ENCODE measurements at regions of chr19 and their contacts with region 1.

Region 1: DNA sequence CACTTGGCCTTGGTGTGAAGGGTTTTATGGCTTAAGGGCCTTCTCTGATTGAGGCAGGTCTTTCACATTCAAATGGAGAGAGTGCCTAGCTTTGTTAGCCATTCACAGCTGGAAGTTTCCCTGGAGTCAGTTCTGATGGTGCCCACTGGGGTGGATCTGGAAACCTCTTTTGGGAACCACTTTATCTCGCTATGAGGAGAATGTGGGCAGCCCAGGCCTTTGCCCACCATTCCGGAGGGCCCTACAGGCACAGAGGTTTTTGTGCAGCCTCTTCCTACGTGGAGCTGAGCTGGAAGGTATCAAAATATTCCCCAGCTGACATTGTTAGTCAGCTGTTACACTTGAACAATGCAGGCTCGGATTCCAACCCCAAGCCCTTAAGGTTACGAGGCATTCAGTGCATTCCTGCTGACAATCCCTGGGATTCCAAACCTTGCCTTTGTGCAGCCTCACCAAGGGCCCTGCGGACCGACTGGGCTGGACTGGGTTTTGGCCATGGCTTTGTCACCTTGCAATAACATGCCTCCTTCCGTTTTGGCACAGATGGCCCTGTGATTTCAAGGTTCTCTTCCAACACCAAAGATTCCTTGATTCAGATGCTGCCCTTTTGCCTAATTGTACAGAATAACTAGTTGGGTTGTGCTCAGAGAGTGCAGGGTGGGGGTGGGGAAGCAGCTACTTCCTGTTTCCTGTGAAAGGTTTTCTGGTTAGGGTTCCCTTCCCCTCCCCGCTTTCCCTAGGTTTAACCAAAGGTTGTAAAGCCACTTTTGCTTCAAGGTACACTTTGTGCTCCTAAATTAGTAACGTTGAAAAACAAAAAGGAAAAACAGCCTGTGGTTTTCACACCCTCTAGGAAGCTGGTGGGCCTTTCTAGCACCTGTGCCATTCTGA is 27.0 kb downstream of the SAE1 start:
- DNase-seq: peak in 1 of 4 experiments; percentile 15
- ATAC-seq: no peak; the same call in 1 of the 3 replicates
- H3K4me3 ChIP-seq: no peak overlapping the region
- H3K27ac ChIP-seq: peak overlapping the region; percentile 67; the same call in 2 of the 3 replicates
- H3K4me1 ChIP-seq: peaks cover 0 to 10% of the 10 kb centered on the region in 2 experiments; a peak in 3 of 5 replicates
- H3K27me3 ChIP-seq: no peaks in the 10 kb centered on the region
- CTCF ChIP-seq: no peak
- EP300 ChIP-seq: no peak
- POLR2A ChIP-seq: no peak
- RAD21 ChIP-seq: no peak

Region 2: DNA sequence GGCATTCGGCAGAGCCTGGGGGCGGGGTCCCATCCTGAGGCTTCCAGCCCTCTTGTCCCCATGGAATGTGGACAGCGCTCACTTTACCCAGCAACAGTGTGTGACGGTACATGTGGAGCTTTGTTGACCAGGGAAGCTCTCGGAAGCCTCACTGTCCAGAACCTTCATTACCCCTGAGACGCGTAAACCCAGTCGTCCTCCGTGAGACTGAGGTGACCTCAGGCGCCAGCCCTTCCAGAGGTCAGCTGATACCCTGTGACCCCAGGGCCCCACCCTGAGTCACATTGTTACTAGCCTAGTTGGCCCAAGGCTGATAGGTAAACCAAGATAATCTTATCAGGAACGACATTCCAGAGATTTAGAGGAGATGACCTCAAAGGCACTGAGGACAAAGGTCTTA is 99.1 kb before region 1 on chr19:
- CTCF ChIA-PET with region 1: no interaction called
- POLR2A ChIA-PET with region 1: no interaction called
- in situ Hi-C with region 1: no loop called
- intact Hi-C with region 1: no loop called
- DNase-seq: peak in 2 of 4 experiments; percentile 38 to 48
- ATAC-seq: peak; percentile 35; the same call in 2 of the 3 replicates
- H3K4me3 ChIP-seq: no peak overlapping the region
- H3K27ac ChIP-seq: no peak overlapping the region
- H3K4me1 ChIP-seq: peaks cover 3 to 17% of the 10 kb centered on the region in 2 experiments; a peak in 4 of 5 replicates
- H3K27me3 ChIP-seq: no peaks in the 10 kb centered on the region
- CTCF ChIP-seq: no peak
- EP300 ChIP-seq: no peak
- POLR2A ChIP-seq: no peak
- RAD21 ChIP-seq: no peak

Region 3: DNA sequence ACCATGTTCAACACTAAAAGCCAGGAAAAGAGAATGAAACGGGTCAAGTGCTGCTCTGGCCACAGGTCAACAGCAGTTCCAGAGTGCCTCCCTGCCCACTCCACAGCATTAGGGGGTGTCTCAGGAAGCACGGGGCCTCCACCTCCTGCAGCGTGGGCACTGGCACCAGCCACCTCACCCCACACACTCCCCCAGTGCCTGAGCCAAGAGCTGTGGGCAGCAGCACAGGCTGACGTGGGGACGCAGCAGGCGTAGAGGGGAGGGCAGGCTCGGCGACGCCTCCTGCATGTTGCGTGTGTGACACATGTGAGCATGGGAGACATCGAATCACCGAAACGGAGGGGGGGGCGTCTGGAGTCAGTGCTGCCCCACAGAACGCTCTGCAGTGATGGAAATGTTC is 87.9 kb before region 1 on chr19:
- CTCF ChIA-PET with region 1: no interaction called
- POLR2A ChIA-PET with region 1: no interaction called
- in situ Hi-C with region 1: no loop called
- intact Hi-C with region 1: no loop called
- DNase-seq: no peak
- ATAC-seq: no peak
- H3K4me3 ChIP-seq: no peak overlapping the region
- H3K27ac ChIP-seq: no peak overlapping the region
- H3K4me1 ChIP-seq: peaks cover 0 to 23% of the 10 kb centered on the region in 2 experiments; a peak in 1 of 5 replicates
- H3K27me3 ChIP-seq: no peaks in the 10 kb centered on the region
- CTCF ChIP-seq: no peak
- EP300 ChIP-seq: no peak
- POLR2A ChIP-seq: no peak
- RAD21 ChIP-seq: no peak

Region 4: GRCh38 chr19:47124937-47125668 is 32.6 kb before region 1 on chr19:
- CTCF ChIA-PET with region 1: no interaction called
- POLR2A ChIA-PET with region 1: no interaction called
- in situ Hi-C with region 1: no loop called
- intact Hi-C with region 1: no loop called
- DNase-seq: peak; percentile 68 to 78 (median 70)
- ATAC-seq: peak; percentile 85
- H3K4me3 ChIP-seq: no peak overlapping the region
- H3K27ac ChIP-seq: no peak overlapping the region
- H3K4me1 ChIP-seq: peaks cover 0 to 10% of the 10 kb centered on the region in 2 experiments; a peak in 3 of 5 replicates
- H3K27me3 ChIP-seq: no peaks in the 10 kb centered on the region
- CTCF ChIP-seq: peak; percentile 68 to 88 (median 74)
- EP300 ChIP-seq: no peak
- POLR2A ChIP-seq: no peak
- RAD21 ChIP-seq: peak; percentile 83 to 92

Region 5: GRCh38 chr19:47414469-47414868 is 256.8 kb after region 1 on chr19:
- CTCF ChIA-PET with region 1: no interaction called
- POLR2A ChIA-PET with region 1: no interaction called
- in situ Hi-C with region 1: loop called (anchors 10 kb)
- intact Hi-C with region 1: no loop called
- DNase-seq: peak; percentile 35 to 70 (median 52)
- ATAC-seq: peak; percentile 87
- H3K4me3 ChIP-seq: no peak overlapping the region
- H3K27ac ChIP-seq: no peak overlapping the region
- H3K4me1 ChIP-seq: peaks cover 4 to 27% of the 10 kb centered on the region in 2 experiments; a peak in 4 of 5 replicates
- H3K27me3 ChIP-seq: peaks cover 40 to 67% of the 10 kb centered on the region in 2 experiments
- CTCF ChIP-seq: peak; percentile 54 to 74 (median 64)
- EP300 ChIP-seq: no peak
- POLR2A ChIP-seq: no peak
- RAD21 ChIP-seq: peak; percentile 28 to 60; a peak in 3 of 4 replicates